GM12878 (cell line): ENCODE measurements at regions of chr15 and their contacts with region 1.

Region 1: GRCh38 chr15:31660816-31661215 is 334.2 kb downstream of the KLF13 start:
- DNase-seq: no peak
- ATAC-seq: no peak
- H3K4me3 ChIP-seq: no peak overlapping the region
- H3K27ac ChIP-seq: no peak overlapping the region
- H3K4me1 ChIP-seq: no peaks in the 10 kb centered on the region
- H3K27me3 ChIP-seq: no peaks in the 10 kb centered on the region
- CTCF ChIP-seq: no peak
- EP300 ChIP-seq: no peak
- POLR2A ChIP-seq: no peak
- RAD21 ChIP-seq: no peak

Region 2: DNA sequence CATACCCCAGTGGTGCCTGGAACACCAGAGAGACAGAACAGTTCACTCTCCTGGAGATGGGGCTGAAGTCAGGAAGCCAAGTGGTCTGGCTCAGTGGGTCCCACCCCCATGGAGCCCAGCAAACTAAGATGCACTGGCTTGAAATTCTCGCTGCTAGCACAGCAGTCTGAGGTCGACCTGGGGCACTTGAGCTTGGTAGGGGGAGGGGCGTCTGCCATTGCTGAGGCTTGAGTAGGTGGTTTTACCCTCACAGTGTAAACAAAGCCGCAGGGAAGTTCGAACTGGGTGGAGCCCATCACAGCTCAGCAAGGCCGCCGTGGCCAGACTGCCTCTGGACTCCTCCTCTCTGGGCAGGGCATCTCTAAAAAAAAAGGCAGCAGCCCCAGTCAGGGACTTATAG is 62.2 kb before region 1 on chr15:
- CTCF ChIA-PET with region 1: no interaction called
- POLR2A ChIA-PET with region 1: no interaction called
- RAD21 ChIA-PET with region 1: no interaction called
- SMC1A ChIA-PET with region 1: no interaction called
- in situ Hi-C with region 1: no loop called
- intact Hi-C with region 1: loop called (anchors 10 kb)
- DNase-seq: no peak
- ATAC-seq: no peak
- H3K4me3 ChIP-seq: no peak overlapping the region
- H3K27ac ChIP-seq: no peak overlapping the region
- H3K4me1 ChIP-seq: no peaks in the 10 kb centered on the region
- H3K27me3 ChIP-seq: no peaks in the 10 kb centered on the region
- CTCF ChIP-seq: no peak
- EP300 ChIP-seq: no peak
- POLR2A ChIP-seq: no peak
- RAD21 ChIP-seq: no peak

Region 3: GRCh38 chr15:31758126-31758525 is 97.3 kb after region 1 on chr15:
- CTCF ChIA-PET with region 1: no interaction called
- POLR2A ChIA-PET with region 1: no interaction called
- RAD21 ChIA-PET with region 1: no interaction called
- SMC1A ChIA-PET with region 1: no interaction called
- in situ Hi-C with region 1: loop called (anchors 25 kb)
- intact Hi-C with region 1: no loop called
- DNase-seq: peak; percentile 9
- ATAC-seq: peak; percentile 39; the same call in 2 of the 3 replicates
- H3K4me3 ChIP-seq: no peak overlapping the region
- H3K27ac ChIP-seq: no peak overlapping the region
- H3K4me1 ChIP-seq: no peaks in the 10 kb centered on the region
- H3K27me3 ChIP-seq: no peaks in the 10 kb centered on the region
- CTCF ChIP-seq: no peak
- EP300 ChIP-seq: no peak
- POLR2A ChIP-seq: no peak
- RAD21 ChIP-seq: no peak

Region 4: DNA sequence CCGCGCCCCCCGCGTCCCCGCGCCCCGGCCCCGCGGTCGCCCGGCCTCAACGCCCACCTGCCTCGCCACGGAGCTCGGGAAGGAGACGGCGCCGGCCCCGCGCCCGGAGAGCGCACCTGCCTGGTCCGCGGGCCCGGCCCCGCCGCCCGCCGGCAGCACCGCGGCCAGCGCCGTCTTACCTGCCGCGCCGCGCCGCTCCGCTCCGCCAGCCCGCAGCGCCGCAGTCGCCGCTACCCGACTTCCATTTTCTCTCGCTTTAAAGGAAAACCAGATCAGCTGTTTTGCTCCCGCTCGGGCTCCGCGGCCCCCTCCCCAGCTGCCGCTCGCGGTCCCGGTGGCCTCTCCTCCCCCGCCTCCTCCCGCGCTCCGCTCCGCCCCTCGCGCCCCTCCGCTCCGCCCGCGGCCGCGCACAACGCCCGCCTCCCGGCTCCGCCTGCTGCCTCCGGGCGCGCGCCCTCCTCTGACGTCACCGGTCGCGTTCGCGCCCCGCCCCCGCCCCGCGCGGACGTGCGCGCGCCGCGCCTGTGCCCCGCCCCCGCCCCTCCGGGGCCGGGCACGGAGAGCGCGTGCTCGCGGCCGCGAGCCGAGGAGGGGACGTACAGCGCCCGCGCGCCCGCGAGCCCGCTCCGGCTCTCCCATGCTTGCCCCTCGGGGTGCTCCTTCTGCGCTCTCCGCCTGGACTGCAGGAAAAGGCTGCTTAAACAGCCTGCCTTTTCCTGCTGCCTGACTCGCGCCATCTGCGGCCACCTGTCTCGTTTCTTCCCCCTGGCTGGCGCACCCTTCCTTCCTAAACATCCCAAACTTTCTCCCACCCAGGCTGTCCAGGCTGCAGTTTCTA is 209.7 kb after region 1 on chr15:
- CTCF ChIA-PET with region 1: no interaction called
- POLR2A ChIA-PET with region 1: no interaction called
- RAD21 ChIA-PET with region 1: no interaction called
- SMC1A ChIA-PET with region 1: no interaction called
- in situ Hi-C with region 1: loop called (anchors 5 kb)
- intact Hi-C with region 1: no loop called
- DNase-seq: no peak
- ATAC-seq: peak; percentile 89
- H3K4me3 ChIP-seq: peak within 1 kb of the TSS; percentile 76
- H3K27ac ChIP-seq: no peak within 1 kb of the TSS
- H3K4me1 ChIP-seq: no peaks in the 10 kb centered on the region
- H3K27me3 ChIP-seq: peaks cover 0 to 6% of the 10 kb centered on the region in 2 experiments; a peak in 2 of 4 replicates
- CTCF ChIP-seq: no peak
- EP300 ChIP-seq: no peak
- POLR2A ChIP-seq: peak; percentile 40; the same call in 1 of the 2 replicates
- RAD21 ChIP-seq: no peak